ENCODE measurements at regions of chr6 and their contacts with region 1.

Region 1: DNA sequence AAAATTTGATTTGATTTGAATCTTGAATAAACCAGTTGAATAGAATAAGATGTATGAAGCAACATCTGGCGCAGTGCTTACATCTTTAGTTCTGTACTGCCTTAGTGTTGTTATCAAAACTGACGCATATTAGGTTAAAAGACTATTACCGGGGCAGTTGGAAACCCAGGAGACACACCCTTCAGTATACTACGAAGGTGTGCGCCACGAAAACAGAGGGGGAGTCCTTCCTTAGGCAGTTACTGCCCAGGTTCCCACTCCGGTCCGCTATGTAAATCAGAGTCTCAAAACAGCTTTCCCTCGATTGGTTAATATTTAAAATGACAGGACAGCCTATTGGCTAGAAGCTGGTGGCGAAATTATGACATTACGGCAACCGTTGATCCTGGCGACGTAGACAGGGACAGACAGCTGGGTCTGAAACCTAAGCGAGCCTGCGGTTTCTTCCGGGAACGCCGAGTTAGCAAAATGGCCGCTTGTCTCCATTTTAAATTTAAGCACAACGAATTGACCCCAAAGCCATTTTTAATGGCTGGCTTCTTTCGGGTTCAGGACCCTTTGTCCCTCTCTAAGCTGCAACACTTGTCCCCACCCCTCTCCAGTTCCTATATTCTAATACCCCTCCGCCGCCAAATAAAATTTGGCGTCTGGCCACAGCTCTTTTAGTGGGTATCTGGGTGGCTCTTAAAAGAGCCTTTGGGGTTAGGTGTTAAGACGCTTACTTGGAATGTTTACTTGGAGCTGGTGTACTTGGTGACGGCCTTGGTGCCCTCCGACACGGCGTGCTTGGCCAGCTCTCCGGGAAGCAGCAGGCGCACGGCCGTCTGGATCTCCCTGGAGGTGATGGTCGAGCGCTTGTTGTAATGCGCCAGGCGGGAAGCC is 35.8 kb downstream of the HFE start:
- DNase-seq: peak; percentile 99
- ATAC-seq: peak; percentile 50
- H3K4me3 ChIP-seq: peak overlapping the region; percentile 96
- H3K27ac ChIP-seq: peak overlapping the region; percentile 94
- H3K4me1 ChIP-seq: peaks cover 49% of the 10 kb centered on the region
- H3K27me3 ChIP-seq: no peaks in the 10 kb centered on the region
- CTCF ChIP-seq: no peak

Region 2: DNA sequence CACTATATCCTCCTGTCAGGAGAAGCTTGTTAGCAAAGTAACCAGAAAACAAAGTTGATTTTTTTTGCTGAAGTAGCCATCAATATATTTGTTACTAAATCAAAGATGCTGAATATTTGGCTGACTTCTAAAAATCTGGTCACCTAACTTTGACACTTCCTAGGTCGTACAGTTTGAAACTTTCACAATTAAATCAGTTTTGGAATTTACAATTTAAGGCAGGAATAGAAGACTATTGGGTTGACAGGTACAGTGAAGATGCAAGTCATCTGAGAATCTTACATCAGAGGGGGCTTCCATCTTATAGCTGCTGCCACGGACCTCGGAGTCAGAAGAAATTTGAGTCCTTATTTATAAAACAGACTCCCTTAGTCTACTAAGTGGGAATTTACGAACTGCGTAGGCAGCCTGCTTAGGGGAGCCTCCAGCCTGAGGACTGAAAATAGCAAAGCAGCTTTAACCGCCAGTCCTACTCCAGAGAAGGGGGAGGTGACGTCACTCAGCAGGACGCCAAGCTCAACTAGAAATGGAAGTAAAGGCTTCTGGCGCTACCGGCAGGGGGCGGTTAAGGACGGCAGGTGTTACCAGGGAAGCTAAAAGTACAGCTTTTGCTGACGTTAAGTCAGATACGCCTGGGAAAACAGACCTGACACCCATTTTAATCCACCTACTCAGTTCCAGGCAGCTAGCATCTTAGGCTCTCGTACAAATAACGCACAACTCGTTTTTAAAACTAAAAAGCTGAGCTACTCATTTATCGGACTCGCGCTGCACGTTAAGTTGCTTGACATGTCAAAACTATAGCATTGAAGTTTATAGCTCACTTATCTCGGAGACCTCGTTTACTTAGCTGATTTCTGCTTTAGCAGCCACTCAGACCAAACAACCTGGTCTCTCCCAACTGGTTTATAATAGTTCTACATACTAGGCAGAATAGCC is 96.9 kb before region 1 on chr6:
- CTCF ChIA-PET with region 1: no interaction called
- POLR2A ChIA-PET with region 1: interaction called, 37 read pairs
- intact Hi-C with region 1: no loop called
- DNase-seq: peak; percentile 96
- ATAC-seq: peak; percentile 37
- H3K4me3 ChIP-seq: peak overlapping the region; percentile 73
- H3K27ac ChIP-seq: peak overlapping the region; percentile 56
- H3K4me1 ChIP-seq: peaks cover 60% of the 10 kb centered on the region
- H3K27me3 ChIP-seq: no peaks in the 10 kb centered on the region
- CTCF ChIP-seq: peak; percentile 85

Region 3: GRCh38 chr6:26045065-26045927 is 77.7 kb before region 1 on chr6:
- CTCF ChIA-PET with region 1: no interaction called
- POLR2A ChIA-PET with region 1: interaction called, 28 read pairs
- intact Hi-C with region 1: loop called (anchors 2 kb)
- DNase-seq: peak; percentile 98
- ATAC-seq: peak; percentile 57
- H3K4me3 ChIP-seq: peak overlapping the region; percentile 71
- H3K27ac ChIP-seq: peak overlapping the region; percentile 74
- H3K4me1 ChIP-seq: peaks cover 21% of the 10 kb centered on the region
- H3K27me3 ChIP-seq: no peaks in the 10 kb centered on the region
- CTCF ChIP-seq: peak; percentile 36; the same call in 1 of the 2 replicates

Region 4: GRCh38 chr6:26103770-26104456 is 19.1 kb before region 1 on chr6:
- CTCF ChIA-PET with region 1: no interaction called
- POLR2A ChIA-PET with region 1: interaction called, 61 read pairs
- intact Hi-C with region 1: loop called (anchors 1 kb)
- DNase-seq: peak; percentile 97
- ATAC-seq: peak; percentile 81
- H3K4me3 ChIP-seq: peak overlapping the region; percentile 68
- H3K27ac ChIP-seq: peak overlapping the region; percentile 84
- H3K4me1 ChIP-seq: peaks cover 28% of the 10 kb centered on the region
- H3K27me3 ChIP-seq: no peaks in the 10 kb centered on the region
- CTCF ChIP-seq: peak; percentile 46; the same call in 1 of the 2 replicates

Region 5: GRCh38 chr6:26268659-26269402 is 145.8 kb after region 1 on chr6:
- CTCF ChIA-PET with region 1: no interaction called
- POLR2A ChIA-PET with region 1: no interaction called
- intact Hi-C with region 1: no loop called
- DNase-seq: peak; percentile 83
- ATAC-seq: peak; percentile 27
- H3K4me3 ChIP-seq: peak overlapping the region; percentile 36
- H3K27ac ChIP-seq: no peak overlapping the region
- H3K4me1 ChIP-seq: no peaks in the 10 kb centered on the region
- H3K27me3 ChIP-seq: no peaks in the 10 kb centered on the region
- CTCF ChIP-seq: no peak

Region 6: DNA sequence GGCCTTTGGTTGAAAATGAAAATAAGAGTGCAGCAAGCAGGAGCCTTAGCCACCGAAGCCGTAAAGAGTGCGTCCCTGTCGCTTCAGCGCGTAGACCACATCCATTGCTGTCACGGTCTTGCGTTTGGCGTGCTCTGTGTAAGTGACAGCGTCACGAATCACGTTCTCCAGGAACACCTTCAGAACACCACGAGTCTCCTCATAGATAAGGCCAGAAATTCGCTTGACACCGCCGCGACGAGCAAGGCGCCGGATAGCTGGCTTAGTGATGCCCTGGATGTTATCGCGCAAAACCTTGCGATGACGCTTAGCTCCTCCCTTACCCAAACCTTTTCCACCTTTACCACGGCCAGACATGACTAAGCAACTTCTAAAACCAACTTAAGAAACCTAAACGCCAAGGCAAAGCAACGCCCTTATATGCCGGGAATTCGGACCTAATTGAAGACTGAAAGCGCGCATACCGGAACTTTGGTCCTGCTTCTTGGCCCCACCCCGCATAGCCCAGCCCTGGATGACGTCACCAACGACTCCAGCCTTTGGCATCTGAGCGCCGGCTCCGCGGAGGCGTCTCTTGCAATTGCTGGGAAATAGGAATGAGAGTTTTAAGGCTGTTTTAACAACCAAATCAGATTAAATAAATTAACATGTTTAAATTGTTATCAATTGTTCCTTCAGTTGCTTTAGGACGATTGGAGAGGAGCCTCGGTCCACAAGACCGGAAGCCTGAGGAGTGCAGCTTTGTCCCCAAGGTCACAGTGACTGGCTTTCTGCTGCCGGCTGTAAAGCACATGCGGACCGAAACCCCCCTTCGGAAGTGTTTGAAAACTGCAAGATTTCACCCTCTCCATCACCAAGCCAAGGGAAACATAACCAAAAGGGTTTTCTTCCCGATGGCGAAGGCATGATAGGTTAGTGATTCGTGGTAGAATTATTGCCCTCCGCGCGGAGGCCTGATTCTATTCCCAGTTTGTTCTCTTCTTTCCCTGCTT is 162.4 kb after region 1 on chr6:
- CTCF ChIA-PET with region 1: no interaction called
- POLR2A ChIA-PET with region 1: interaction called, 12 read pairs
- intact Hi-C with region 1: loop called (anchors 2 kb)
- DNase-seq: peak; percentile 100
- ATAC-seq: peak; percentile 77
- H3K4me3 ChIP-seq: peak overlapping the region; percentile 92
- H3K27ac ChIP-seq: peak overlapping the region; percentile 94
- H3K4me1 ChIP-seq: peaks cover 19% of the 10 kb centered on the region
- H3K27me3 ChIP-seq: no peaks in the 10 kb centered on the region
- CTCF ChIP-seq: no peak

Region 7: GRCh38 chr6:27809939-27810767 is 1687.1 kb after region 1 on chr6:
- CTCF ChIA-PET with region 1: no interaction called
- POLR2A ChIA-PET with region 1: no interaction called
- intact Hi-C with region 1: loop called (anchors 2 kb)
- DNase-seq: peak; percentile 99
- ATAC-seq: peak; percentile 28
- H3K4me3 ChIP-seq: peak overlapping the region; percentile 76
- H3K27ac ChIP-seq: peak overlapping the region; percentile 65
- H3K4me1 ChIP-seq: peaks cover 28% of the 10 kb centered on the region
- H3K27me3 ChIP-seq: no peaks in the 10 kb centered on the region
- CTCF ChIP-seq: 0 out of 2 replicates have a peak, but pooled peaks have one; percentile 14

Measured in PC-3 (cell line).